Right ventricle myocardium superior (tissue), 1 donor: ENCODE measurements at regions of chr3 and their contacts with region 1.

Region 1: DNA sequence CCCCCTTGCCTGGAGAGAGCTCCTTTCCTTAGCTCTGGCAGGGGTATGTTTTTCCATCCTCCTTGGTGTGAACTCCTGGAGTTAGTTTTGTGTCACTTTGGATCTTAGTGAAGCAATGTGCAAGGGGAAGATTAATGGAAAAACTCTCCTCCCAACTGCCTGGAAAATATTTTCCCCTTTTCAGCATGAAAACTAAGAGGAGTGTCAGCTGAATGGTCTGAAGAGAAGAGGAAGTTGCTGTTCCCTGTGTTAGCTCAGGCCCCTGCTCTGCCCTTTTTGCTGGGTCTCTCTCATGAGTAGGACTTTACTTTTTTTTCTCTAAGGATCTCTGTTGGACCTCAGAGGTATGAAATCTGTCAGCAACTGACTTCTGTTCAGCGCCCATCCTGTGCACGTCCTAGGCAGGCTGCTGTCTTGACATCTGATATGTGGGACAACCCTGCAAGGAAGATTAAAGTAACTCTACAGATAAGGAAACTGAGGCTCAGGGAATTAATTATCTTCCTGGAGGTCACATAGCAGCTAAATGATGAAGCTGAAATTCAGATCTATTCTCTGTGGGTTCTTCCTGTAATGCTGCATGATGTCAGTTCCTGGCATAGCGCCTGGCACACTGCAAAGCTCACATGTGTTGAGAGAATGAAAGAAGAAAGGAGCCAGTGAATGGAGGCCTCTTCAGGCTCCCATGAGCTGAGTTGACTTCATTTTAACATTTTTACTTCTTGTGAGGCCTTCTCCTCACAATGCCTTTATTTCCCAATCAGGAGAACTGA is 109.7 kb upstream of the GALNT15 start:
- DNase-seq: peak; percentile 93
- ATAC-seq: peak; percentile 79

Region 2: DNA sequence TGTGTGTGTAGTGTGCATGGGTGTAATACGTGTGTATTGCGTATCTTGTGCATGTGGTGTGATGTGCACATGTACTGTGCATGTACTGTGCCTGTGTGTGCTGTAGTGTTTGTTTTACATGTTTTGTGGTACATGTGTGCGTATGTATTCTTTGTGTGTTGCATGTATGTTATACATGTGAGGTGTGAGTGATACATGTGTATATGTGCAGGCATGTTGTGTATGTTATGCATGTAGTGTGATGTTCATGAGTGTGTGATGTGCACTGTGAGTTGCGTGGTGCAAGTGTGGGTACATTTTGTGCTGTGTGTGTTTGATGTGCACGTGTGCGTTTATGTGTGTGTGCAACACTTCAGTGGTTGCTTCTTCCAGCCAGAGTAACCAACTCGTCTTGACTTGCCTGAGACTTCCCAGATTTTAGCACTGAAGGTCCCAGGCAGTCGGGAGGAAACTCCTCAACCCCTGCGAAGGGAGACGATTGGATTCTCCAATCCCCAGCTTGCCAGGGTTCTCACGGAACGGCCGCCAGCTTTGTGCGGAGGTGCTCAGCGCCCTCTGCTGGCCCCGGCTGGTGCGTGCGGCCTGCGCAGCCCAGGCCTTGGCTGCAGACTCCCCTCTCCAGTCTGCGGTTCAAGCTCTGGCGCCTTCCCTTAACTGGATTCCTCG is 113.3 kb after region 1 on chr3:
- intact Hi-C with region 1: loop called (anchors 5 kb)
- DNase-seq: peak; percentile 91
- ATAC-seq: peak; percentile 79